Astrocyte of the cerebellum (primary cell): ENCODE measurements at regions of chr13 and their contacts with region 1.

Region 1: GRCh38 chr13:83440465-83440864 is 441.8 kb downstream of the SLITRK1 start:
- DNase-seq: no peak
- H3K4me3 ChIP-seq: no peak overlapping the region
- CTCF ChIP-seq: no peak

Region 2: GRCh38 chr13:83350569-83350968 is 89.9 kb before region 1 on chr13:
- in situ Hi-C with region 1: no loop called
- DNase-seq: no peak
- H3K4me3 ChIP-seq: no peak overlapping the region
- CTCF ChIP-seq: no peak

Region 3: DNA sequence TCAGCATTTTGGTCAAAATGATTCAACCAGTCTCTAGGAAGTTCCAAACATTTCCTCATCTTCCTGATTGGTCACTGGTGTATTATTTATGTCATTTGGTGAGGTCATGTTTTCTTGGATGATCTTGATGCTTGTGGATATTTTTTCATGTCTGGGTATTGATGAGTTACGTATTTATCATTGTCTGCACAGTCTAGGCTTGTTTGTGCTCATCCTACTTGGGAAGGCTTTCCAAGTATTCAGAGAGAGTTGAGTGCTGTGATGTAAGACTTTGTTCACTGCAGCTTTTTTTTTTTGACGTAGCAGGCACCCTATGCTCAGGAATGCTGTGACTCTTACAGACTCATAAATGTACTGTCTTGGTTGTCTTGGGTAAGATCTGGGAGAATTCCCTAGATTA is 67.7 kb before region 1 on chr13:
- in situ Hi-C with region 1: no loop called
- DNase-seq: no peak
- H3K4me3 ChIP-seq: no peak overlapping the region
- CTCF ChIP-seq: no peak

Region 4: GRCh38 chr13:83386609-83387008 is 53.9 kb before region 1 on chr13:
- in situ Hi-C with region 1: loop called (anchors 5 kb)
- DNase-seq: no peak
- H3K4me3 ChIP-seq: no peak overlapping the region
- CTCF ChIP-seq: no peak

Region 5: GRCh38 chr13:83919775-83920174 is 479.3 kb after region 1 on chr13:
- in situ Hi-C with region 1: no loop called
- DNase-seq: no peak
- H3K4me3 ChIP-seq: no peak overlapping the region
- CTCF ChIP-seq: no peak